ENCODE measurements at regions of chr16 and their contacts with region 1.

Region 1: DNA sequence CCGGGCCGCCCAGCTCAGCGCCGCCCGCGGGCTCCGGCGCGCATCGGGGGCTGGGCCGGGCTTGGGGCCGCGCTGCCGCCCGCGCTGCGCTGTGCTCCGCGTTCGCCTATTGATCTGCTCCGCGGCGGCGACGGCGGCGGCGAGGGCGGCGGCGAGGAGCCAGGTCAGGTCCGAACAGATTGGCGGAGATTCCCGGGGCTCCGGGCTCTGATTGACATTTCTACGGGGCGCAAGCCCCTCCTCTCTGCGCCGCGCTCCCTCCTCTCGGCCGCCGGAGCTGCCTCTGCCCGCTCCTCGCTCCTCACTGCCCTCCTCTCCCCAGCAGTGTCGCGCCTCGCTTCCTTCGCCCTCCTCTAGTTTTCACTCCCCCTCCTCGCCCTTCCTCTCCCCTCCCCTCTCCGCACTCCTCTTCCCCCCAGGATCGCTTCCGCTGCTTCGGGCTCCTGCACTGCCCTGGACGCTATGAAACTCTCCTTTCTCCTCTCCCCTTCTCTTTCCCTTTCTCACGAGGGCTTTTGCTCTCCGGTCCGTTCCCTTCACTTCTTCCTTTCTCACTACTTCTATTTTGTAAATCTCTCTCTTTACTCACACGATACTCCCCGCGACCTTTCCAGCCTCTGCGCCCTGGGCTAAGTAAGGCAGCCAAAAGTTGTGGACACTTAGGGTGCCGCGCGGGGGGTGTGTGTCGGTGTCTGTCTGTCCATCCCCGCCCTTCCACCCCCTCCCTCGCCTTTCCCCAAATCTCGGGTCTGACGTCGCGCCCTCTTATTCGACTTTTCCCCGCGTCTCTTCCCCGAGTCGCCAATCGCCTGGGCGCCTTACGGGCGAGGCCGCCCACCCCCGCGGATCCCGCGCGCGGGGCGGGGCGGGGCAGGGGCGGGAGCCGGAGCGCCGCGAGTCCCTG is at the start of gene IRX3:
- DNase-seq: peak; percentile 97
- H3K4me3 Mint-ChIP-seq: peak within 1 kb of the TSS; percentile 94
- H3K27ac Mint-ChIP-seq: peak within 1 kb of the TSS; percentile 95
- H3K4me1 Mint-ChIP-seq: peaks cover 4% of the 10 kb centered on the region
- H3K27me3 Mint-ChIP-seq: no peaks in the 10 kb centered on the region
- CTCF ChIP-seq: no peak
- total RNA-seq, gene IRX3: 15.7 and 17.6 TPM in 2 replicates

Region 2: DNA sequence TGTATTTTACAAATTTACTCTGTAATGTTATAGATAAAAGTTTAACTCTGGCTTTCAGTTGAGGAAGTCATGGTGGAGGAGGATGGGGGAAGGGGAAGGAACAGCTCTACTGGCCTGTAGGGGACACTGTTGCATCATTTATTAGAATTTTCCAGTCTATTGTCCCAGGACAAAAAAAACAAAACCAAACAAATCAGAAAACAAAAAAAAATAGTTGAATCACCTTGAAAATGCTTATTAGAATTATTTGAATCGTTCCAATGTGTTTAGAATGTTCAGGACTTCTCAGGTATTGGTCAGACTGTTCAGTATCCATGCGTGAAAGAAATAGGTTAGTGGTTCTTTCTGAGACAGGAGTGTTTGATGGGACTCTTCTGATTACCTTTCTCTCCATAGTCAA is 340.3 kb before region 1 on chr16:
- CTCF ChIA-PET with region 1: interaction called, 3 read pairs
- POLR2A ChIA-PET with region 1: interaction called, 3 read pairs
- intact Hi-C with region 1: loop called (anchors 2 kb)
- DNase-seq: peak; percentile 53
- H3K4me3 Mint-ChIP-seq: no peak overlapping the region
- H3K27ac Mint-ChIP-seq: peak overlapping the region; percentile 63
- H3K4me1 Mint-ChIP-seq: peaks cover 6% of the 10 kb centered on the region
- H3K27me3 Mint-ChIP-seq: no peaks in the 10 kb centered on the region
- CTCF ChIP-seq: peak; percentile 54

Region 3: GRCh38 chr16:54233615-54234014 is 52.7 kb before region 1 on chr16:
- CTCF ChIA-PET with region 1: no interaction called
- POLR2A ChIA-PET with region 1: no interaction called
- intact Hi-C with region 1: no loop called
- DNase-seq: no peak
- H3K4me3 Mint-ChIP-seq: no peak overlapping the region
- H3K27ac Mint-ChIP-seq: no peak overlapping the region
- H3K4me1 Mint-ChIP-seq: no peaks in the 10 kb centered on the region
- H3K27me3 Mint-ChIP-seq: no peaks in the 10 kb centered on the region
- CTCF ChIP-seq: no peak

Region 4: GRCh38 chr16:54326266-54326662 is 39.9 kb after region 1 on chr16:
- CTCF ChIA-PET with region 1: no interaction called
- POLR2A ChIA-PET with region 1: no interaction called
- intact Hi-C with region 1: no loop called
- DNase-seq: no peak
- H3K4me3 Mint-ChIP-seq: no peak overlapping the region
- H3K27ac Mint-ChIP-seq: no peak overlapping the region
- H3K4me1 Mint-ChIP-seq: peaks cover 5% of the 10 kb centered on the region
- H3K27me3 Mint-ChIP-seq: no peaks in the 10 kb centered on the region
- CTCF ChIP-seq: no peak

Region 5: GRCh38 chr16:54341892-54342776 is 55.8 kb after region 1 on chr16:
- CTCF ChIA-PET with region 1: interaction called, 3 read pairs
- POLR2A ChIA-PET with region 1: interaction called, 31 read pairs
- intact Hi-C with region 1: no loop called
- DNase-seq: peak; percentile 87
- H3K4me3 Mint-ChIP-seq: peak overlapping the region; percentile 40
- H3K27ac Mint-ChIP-seq: peak overlapping the region; percentile 83
- H3K4me1 Mint-ChIP-seq: peaks cover 26% of the 10 kb centered on the region
- H3K27me3 Mint-ChIP-seq: no peaks in the 10 kb centered on the region
- CTCF ChIP-seq: no peak

Region 6: DNA sequence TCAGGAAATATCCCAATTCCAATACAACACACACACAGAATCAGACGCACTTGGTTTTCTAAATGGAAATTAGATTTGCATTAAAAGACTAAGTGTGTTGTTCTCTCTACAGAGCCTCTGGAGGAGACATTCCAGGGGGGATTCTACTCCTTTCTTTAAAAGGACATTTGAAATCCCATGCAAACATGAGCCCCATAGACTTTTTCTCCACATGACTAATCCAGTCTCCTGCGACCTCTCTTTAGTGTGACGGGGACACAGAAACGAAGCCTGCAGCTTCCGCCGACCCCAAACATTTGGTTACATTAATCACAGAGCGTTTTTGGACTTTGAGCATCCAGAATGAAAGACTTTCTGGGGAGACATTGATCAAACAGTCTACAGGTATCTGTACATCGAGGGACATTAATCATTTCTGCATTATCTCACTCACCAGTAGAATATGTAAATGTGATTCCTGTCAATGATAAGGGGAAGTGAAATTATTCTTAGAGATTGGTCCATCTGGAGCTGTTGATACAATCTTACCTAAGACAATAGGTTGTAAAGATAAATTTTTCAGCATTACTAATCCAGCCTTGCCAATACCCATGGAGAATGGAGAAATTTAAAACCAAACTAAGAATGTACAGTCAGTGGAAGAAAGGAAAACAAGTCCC is 103.6 kb after region 1 on chr16:
- CTCF ChIA-PET with region 1: no interaction called
- POLR2A ChIA-PET with region 1: no interaction called
- intact Hi-C with region 1: no loop called
- DNase-seq: no peak
- H3K4me3 Mint-ChIP-seq: no peak overlapping the region
- H3K27ac Mint-ChIP-seq: no peak overlapping the region
- H3K4me1 Mint-ChIP-seq: no peaks in the 10 kb centered on the region
- H3K27me3 Mint-ChIP-seq: no peaks in the 10 kb centered on the region
- CTCF ChIP-seq: no peak

Region 7: DNA sequence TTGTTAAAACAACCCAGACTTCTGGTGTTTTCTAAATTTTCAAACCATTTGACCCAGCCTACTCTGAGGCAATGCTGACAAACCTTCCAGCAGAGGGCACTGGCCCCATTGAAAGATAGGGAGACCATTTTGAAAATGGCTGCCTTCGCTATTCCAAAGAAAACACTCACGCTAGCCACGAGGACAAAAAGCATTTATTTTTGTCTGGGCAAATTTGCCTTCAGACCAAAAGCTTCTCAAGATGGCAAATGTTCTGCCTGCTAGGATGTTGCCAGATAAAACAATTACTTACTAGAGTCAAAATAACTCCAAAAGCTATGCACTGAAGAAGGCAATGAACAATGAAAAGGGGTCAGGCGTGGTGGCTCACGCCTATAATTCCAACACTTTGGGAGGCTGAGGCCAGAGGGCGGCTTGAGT is 347.6 kb after region 1 on chr16:
- CTCF ChIA-PET with region 1: interaction called, 5 read pairs
- POLR2A ChIA-PET with region 1: interaction called, 8 read pairs
- intact Hi-C with region 1: loop called (anchors 1 kb)
- DNase-seq: peak; percentile 78
- H3K4me3 Mint-ChIP-seq: no peak overlapping the region
- H3K27ac Mint-ChIP-seq: no peak overlapping the region
- H3K4me1 Mint-ChIP-seq: peaks cover 8% of the 10 kb centered on the region
- H3K27me3 Mint-ChIP-seq: no peaks in the 10 kb centered on the region
- CTCF ChIP-seq: peak; percentile 76

Region 8: DNA sequence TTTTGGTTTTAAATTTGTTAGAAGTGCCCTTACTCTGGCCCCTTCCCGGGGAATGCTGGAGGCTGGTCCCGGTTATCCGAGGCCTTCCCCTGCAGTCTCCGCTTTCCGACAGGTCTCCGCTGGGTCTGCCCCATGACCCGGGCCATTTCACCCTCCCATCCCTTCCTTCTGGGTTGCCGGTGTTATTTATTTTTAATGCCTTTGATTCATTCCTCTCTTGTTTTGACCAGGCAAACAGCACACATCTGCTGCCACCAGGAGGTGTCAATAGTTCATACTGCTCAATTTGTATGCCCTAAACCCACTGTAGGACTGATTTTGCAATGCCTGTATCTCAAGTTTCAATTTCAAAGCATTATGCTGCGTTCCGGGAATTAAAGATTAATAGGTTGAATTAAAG is 531.1 kb after region 1 on chr16:
- CTCF ChIA-PET with region 1: no interaction called
- POLR2A ChIA-PET with region 1: no interaction called
- intact Hi-C with region 1: loop called (anchors 10 kb)
- DNase-seq: peak; percentile 69
- H3K4me3 Mint-ChIP-seq: no peak overlapping the region
- H3K27ac Mint-ChIP-seq: no peak overlapping the region
- H3K4me1 Mint-ChIP-seq: no peaks in the 10 kb centered on the region
- H3K27me3 Mint-ChIP-seq: no peaks in the 10 kb centered on the region
- CTCF ChIP-seq: peak; percentile 42

Region 9: DNA sequence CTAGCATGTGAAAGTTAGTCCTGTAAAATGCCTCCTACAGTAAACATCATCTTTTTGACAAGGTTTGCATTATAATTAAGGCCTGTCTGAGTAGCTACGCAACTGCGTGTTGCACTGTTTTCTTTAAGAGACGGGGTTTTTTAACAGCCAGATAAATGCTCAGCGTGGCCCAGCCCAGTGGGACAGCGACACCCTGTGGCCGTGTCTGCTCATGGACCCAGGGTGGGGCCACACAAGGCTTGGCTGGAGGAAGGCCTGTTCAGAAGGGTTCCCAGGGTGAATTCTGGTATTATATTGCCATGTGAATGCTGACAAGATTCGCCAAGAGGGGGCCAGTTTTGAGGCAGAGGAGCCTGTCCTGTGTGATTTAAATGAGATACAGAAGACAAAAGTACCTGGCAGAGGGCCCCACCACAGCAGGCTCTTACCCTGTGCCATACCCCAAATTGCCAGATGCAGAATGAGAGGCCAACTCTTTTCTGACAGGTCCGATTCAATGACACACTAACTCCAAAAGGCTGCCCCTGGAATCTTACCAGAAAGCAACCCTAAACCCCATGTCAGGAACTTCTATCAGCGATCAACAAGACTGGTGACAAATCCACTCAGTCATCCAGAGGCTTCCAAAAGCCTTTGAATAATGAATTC is 971.7 kb after region 1 on chr16:
- CTCF ChIA-PET with region 1: no interaction called
- POLR2A ChIA-PET with region 1: no interaction called
- intact Hi-C with region 1: loop called (anchors 5 kb)
- DNase-seq: peak; percentile 62
- H3K4me3 Mint-ChIP-seq: no peak overlapping the region
- H3K27ac Mint-ChIP-seq: no peak overlapping the region
- H3K4me1 Mint-ChIP-seq: no peaks in the 10 kb centered on the region
- H3K27me3 Mint-ChIP-seq: no peaks in the 10 kb centered on the region
- CTCF ChIP-seq: peak; percentile 79

Measured in MCF 10A (cell line).